ENCODE measurements at regions of chr1 and their contacts with region 1.

Region 1: GRCh38 chr1:228664399-228664914 is 70.8 kb upstream of the RHOU start:
- DNase-seq: peak; percentile 54 to 83 (median 71)
- ATAC-seq: peak; percentile 73
- H3K4me3 ChIP-seq: no peak overlapping the region
- H3K4me3 Mint-ChIP-seq: no peak overlapping the region
- H3K27ac ChIP-seq: no peak overlapping the region
- H3K27ac Mint-ChIP-seq: no peak overlapping the region
- H3K4me1 ChIP-seq: no peaks in the 10 kb centered on the region
- H3K4me1 Mint-ChIP-seq: peaks cover 0 to 2% (median 0%) of the 10 kb centered on the region in 7 donors
- H3K27me3 ChIP-seq: no peaks in the 10 kb centered on the region
- H3K27me3 Mint-ChIP-seq: peaks cover 0 to 28% (median 11%) of the 10 kb centered on the region in 5 donors

Region 2: GRCh38 chr1:228174482-228175375 is 489.7 kb before region 1 on chr1:
- CTCF ChIA-PET with region 1: no interaction called
- POLR2A ChIA-PET with region 1: no interaction called
- intact Hi-C with region 1: no loop called
- DNase-seq: peak in 5 of 9 donors; percentile 24 to 58 (median 34)
- ATAC-seq: peak; percentile 78
- H3K4me3 ChIP-seq: no peak overlapping the region
- H3K4me3 Mint-ChIP-seq: no peak overlapping the region
- H3K27ac ChIP-seq: no peak overlapping the region
- H3K27ac Mint-ChIP-seq: peak overlapping the region in 1 of 9 donors; percentile 67
- H3K4me1 ChIP-seq: no peaks in the 10 kb centered on the region
- H3K4me1 Mint-ChIP-seq: peaks cover 3 to 18% (median 10%) of the 10 kb centered on the region in 7 donors
- H3K27me3 ChIP-seq: no peaks in the 10 kb centered on the region
- H3K27me3 Mint-ChIP-seq: no peaks in the 10 kb centered on the region

Region 3: DNA sequence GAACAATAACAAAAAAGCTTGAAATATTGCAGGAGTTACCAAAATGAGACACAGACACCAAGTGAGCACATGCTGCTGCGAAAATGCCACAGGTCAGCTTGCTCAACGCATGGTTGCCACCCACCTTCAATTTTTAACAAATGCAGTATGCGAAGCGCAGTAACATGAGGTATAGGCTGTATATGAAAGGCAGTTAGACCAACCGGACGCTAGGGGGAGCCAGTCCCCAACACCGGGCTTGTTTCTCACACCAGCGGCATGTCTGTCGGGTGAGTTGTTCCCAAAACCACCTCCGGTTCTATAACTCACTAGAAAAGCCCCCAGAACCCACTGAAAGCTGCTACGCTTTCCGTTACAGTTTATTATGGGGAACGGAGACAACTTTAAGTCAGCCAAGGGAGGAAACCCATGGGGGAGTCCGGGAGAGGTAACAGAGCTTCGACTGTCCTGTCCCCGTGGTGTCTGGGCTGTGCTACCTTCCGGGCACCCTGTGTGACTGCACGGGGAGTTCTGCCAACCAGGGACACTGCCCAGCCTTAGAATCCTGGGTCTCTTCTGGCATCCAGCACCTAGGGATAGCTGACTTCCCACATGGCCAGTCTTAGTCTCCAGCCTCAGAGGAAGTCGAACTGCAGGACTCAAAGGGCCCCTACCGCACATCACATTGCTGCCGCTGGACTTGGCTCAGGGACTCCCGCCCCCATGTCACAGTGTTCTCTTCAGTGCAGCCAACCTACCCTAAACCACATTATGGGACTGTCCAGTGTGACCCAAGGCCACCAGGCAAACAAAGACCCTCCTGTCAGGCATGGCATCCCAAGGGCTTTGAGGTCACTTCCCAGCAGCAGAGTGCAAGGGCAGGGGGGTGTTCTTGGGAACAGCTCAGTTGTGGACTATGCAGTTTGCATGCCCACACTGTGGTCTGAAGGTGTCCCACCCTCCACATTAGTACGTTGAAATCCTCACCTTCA is 163.3 kb before region 1 on chr1:
- CTCF ChIA-PET with region 1: no interaction called
- POLR2A ChIA-PET with region 1: no interaction called
- intact Hi-C with region 1: loop called in 1 of 2 experiments (anchors 1 kb)
- DNase-seq: peak; percentile 72 to 89 (median 85)
- ATAC-seq: peak; percentile 99
- H3K4me3 ChIP-seq: peak overlapping the region; percentile 44
- H3K4me3 Mint-ChIP-seq: peak overlapping the region; percentile 71 to 86 (median 80)
- H3K27ac ChIP-seq: no peak overlapping the region
- H3K27ac Mint-ChIP-seq: peak overlapping the region in 5 of 9 donors; percentile 19 to 72 (median 66)
- H3K4me1 ChIP-seq: peaks cover 9 to 14% of the 10 kb centered on the region in 2 donors
- H3K4me1 Mint-ChIP-seq: peaks cover 9 to 31% (median 18%) of the 10 kb centered on the region in 7 donors
- H3K27me3 ChIP-seq: no peaks in the 10 kb centered on the region
- H3K27me3 Mint-ChIP-seq: peaks cover 0 to 8% (median 0%) of the 10 kb centered on the region in 5 donors

Region 4: DNA sequence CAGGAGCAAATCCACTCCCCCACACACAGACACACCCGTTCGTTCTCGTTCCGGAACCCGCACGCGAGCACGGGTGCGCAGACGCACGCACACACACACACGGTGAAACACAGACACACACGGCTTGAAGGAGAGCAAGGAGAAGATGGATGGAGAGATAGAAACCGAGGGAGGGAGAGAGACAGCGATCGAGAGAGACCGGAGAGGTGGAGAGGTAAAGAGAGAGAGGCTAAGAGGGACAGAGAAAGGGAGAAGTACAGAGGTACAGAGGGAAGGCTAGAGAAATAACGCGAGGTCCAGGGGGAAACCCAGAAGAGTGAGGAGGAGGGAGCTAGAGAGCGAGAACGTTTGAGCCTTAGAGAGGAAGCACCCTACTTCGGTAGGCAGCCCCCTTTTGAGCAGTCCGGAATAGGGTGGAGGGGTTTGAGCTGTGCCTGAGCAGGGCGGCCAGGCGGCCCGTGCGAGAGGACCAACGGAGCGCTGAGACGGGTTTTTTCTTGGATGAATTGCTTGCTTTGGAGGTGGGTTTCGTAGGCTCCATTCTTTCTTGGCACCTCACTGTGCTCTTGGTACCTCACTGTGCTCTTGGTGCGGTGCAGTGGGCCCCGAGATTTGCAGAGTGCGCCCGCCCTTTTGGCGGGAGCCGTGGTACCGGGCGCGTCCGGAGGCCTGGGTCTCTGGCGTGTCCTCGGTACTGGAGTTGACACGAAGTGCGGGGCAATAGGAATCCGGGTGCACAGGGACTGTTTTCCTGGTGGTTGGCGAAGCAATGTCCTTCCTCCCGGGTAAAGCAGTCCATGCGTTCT is 17.5 kb before region 1 on chr1:
- CTCF ChIA-PET with region 1: no interaction called
- POLR2A ChIA-PET with region 1: no interaction called
- intact Hi-C with region 1: no loop called
- DNase-seq: peak in 7 of 9 donors; percentile 23 to 58 (median 43)
- ATAC-seq: peak; percentile 77
- H3K4me3 ChIP-seq: peak overlapping the region; percentile 94
- H3K4me3 Mint-ChIP-seq: peak overlapping the region; percentile 86 to 99 (median 95)
- H3K27ac ChIP-seq: no peak overlapping the region
- H3K27ac Mint-ChIP-seq: peak overlapping the region in 8 of 9 donors; percentile 26 to 91 (median 74)
- H3K4me1 ChIP-seq: peaks cover 25 to 26% of the 10 kb centered on the region in 2 donors
- H3K4me1 Mint-ChIP-seq: peaks cover 24 to 34% (median 30%) of the 10 kb centered on the region in 7 donors
- H3K27me3 ChIP-seq: peaks cover 3 to 38% of the 10 kb centered on the region in 2 donors
- H3K27me3 Mint-ChIP-seq: peaks cover 15 to 53% (median 48%) of the 10 kb centered on the region in 5 donors

Region 5: GRCh38 chr1:229479660-229480399 is 815.4 kb after region 1 on chr1:
- CTCF ChIA-PET with region 1: no interaction called
- POLR2A ChIA-PET with region 1: no interaction called
- intact Hi-C with region 1: loop called in 1 of 2 experiments (anchors 1 kb)
- DNase-seq: no peak
- ATAC-seq: no peak
- H3K4me3 ChIP-seq: no peak overlapping the region
- H3K4me3 Mint-ChIP-seq: no peak overlapping the region
- H3K27ac ChIP-seq: no peak overlapping the region
- H3K27ac Mint-ChIP-seq: peak overlapping the region in 2 of 9 donors; percentile 36 to 43
- H3K4me1 ChIP-seq: no peaks in the 10 kb centered on the region
- H3K4me1 Mint-ChIP-seq: peaks cover 4 to 19% (median 9%) of the 10 kb centered on the region in 7 donors
- H3K27me3 ChIP-seq: no peaks in the 10 kb centered on the region
- H3K27me3 Mint-ChIP-seq: no peaks in the 10 kb centered on the region

Region 6: DNA sequence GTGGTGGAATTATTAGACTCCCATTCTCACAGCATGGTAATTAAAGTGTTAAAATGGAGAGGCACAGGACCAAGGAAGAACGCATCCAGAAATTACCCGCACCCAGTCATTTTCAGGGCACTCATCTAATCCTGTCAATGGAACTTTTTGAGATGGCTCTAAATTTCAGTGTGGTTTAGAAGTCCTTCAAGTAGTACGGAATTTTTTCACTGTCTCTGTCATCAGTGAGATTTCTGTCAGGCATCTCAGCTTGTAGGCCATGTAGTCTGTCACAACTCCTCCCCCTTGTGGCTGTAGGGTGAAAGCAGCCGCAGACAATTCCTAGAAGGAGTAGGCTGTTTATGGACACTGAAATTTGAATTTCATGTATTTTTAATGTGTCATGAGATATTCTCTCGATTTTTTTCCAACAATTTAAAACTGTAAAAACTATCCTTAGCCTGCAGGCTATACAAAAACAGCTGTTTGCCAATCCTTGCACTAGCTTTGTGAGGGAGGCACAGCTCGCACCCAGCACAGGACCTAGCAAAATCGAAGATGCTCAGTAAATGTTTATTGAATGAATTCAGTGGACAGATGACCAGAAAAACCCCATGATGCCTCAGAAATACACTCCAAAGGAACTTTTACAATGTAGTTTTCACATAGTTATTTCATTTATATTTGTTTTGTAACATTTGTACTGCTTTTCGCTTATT is 850.3 kb after region 1 on chr1:
- CTCF ChIA-PET with region 1: interaction called, 5 read pairs
- POLR2A ChIA-PET with region 1: no interaction called
- intact Hi-C with region 1: loop called (anchors 1 kb)
- DNase-seq: peak in 8 of 9 donors; percentile 34 to 76 (median 70)
- ATAC-seq: peak; percentile 98
- H3K4me3 ChIP-seq: no peak overlapping the region
- H3K4me3 Mint-ChIP-seq: no peak overlapping the region
- H3K27ac ChIP-seq: no peak overlapping the region
- H3K27ac Mint-ChIP-seq: peak overlapping the region in 5 of 9 donors; percentile 6 to 86 (median 32)
- H3K4me1 ChIP-seq: no peaks in the 10 kb centered on the region
- H3K4me1 Mint-ChIP-seq: peaks cover 0 to 9% (median 7%) of the 10 kb centered on the region in 7 donors
- H3K27me3 ChIP-seq: no peaks in the 10 kb centered on the region
- H3K27me3 Mint-ChIP-seq: peaks cover 0 to 5% (median 0%) of the 10 kb centered on the region in 5 donors

Measured in naive thymus-derived CD4-positive, alpha-beta T cell (primary cell).